Endothelial cell of umbilical vein (primary cell): ENCODE measurements at regions of chr10 and their contacts with region 1.

Region 1: GRCh38 chr10:71974489-71975021 is 10.4 kb downstream of the CHST3 start:
- DNase-seq: peak; percentile 45
- H3K4me3 ChIP-seq: no peak overlapping the region
- H3K27ac ChIP-seq: peak overlapping the region; percentile 16
- H3K4me1 ChIP-seq: peaks cover 44% of the 10 kb centered on the region
- H3K27me3 ChIP-seq: no peaks in the 10 kb centered on the region
- CTCF ChIP-seq: no peak
- POLR2A ChIP-seq: no peak

Region 2: DNA sequence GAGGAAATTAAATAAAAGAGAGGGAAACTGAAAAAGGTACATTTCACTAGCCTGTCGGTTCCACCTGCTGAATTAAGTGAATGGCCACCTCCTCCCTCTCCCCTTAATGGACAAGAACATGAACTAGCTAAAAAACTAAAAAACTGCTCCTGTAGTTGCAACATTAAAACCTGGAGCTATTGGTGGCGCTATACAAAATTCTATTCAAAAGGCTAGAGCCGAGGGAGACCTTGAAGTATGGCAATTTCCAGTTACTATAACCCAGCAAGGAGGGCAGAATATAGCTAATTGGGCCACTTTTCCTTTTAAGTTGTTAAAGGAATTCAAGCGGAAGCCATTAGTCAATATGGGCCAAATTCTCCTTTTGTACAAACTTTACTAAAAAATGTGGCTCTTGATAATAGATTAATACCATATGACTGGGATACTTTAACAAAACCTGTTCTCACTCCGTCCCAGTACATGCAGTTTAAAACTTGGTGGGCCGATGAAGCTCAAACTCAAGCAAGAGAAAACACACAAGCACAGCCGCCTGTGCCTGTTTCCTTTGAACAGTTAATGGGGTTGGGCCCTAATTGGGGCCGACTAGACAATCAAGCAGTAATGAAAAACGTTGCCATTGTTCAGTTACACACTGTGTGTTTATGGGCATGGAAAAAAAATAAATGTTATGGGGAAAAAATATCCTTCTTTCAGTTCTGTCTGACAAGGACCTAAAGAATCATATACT is 16.8 kb before region 1 on chr10:
- CTCF ChIA-PET with region 1: interaction called, 57 read pairs
- POLR2A ChIA-PET with region 1: no interaction called
- dilution Hi-C with region 1: no loop called
- intact Hi-C with region 1: loop called (anchors 1 kb)
- DNase-seq: no peak
- H3K4me3 ChIP-seq: no peak overlapping the region
- H3K27ac ChIP-seq: no peak overlapping the region
- H3K4me1 ChIP-seq: peaks cover 12% of the 10 kb centered on the region
- H3K27me3 ChIP-seq: peaks cover 4 to 6% of the 10 kb centered on the region in 2 experiments
- CTCF ChIP-seq: no peak
- POLR2A ChIP-seq: no peak

Region 3: GRCh38 chr10:71963756-71964668 is 10.5 kb before region 1 on chr10 and contains the start of gene CHST3:
- CTCF ChIA-PET with region 1: interaction called, 12 read pairs
- POLR2A ChIA-PET with region 1: no interaction called
- dilution Hi-C with region 1: no loop called
- intact Hi-C with region 1: no loop called
- DNase-seq: peak; percentile 62
- H3K4me3 ChIP-seq: peak within 1 kb of the TSS; percentile 21 to 57 (median 55)
- H3K27ac ChIP-seq: peak within 1 kb of the TSS; percentile 60
- H3K4me1 ChIP-seq: peaks cover 18% of the 10 kb centered on the region
- H3K27me3 ChIP-seq: no peaks in the 10 kb centered on the region
- CTCF ChIP-seq: no peak
- POLR2A ChIP-seq: peak; percentile 18
- total RNA-seq, gene CHST3: 10.0 and 11.5 TPM in 2 replicates

Region 4: GRCh38 chr10:72426986-72427385 is 452.4 kb after region 1 on chr10:
- CTCF ChIA-PET with region 1: no interaction called
- POLR2A ChIA-PET with region 1: no interaction called
- dilution Hi-C with region 1: no loop called
- intact Hi-C with region 1: no loop called
- DNase-seq: no peak
- H3K4me3 ChIP-seq: no peak overlapping the region
- H3K27ac ChIP-seq: no peak overlapping the region
- H3K4me1 ChIP-seq: no peaks in the 10 kb centered on the region
- H3K27me3 ChIP-seq: no peaks in the 10 kb centered on the region
- CTCF ChIP-seq: no peak
- POLR2A ChIP-seq: no peak